WTC11 (cell line): ENCODE measurements at regions of chr14 and their contacts with region 1.

Region 1: DNA sequence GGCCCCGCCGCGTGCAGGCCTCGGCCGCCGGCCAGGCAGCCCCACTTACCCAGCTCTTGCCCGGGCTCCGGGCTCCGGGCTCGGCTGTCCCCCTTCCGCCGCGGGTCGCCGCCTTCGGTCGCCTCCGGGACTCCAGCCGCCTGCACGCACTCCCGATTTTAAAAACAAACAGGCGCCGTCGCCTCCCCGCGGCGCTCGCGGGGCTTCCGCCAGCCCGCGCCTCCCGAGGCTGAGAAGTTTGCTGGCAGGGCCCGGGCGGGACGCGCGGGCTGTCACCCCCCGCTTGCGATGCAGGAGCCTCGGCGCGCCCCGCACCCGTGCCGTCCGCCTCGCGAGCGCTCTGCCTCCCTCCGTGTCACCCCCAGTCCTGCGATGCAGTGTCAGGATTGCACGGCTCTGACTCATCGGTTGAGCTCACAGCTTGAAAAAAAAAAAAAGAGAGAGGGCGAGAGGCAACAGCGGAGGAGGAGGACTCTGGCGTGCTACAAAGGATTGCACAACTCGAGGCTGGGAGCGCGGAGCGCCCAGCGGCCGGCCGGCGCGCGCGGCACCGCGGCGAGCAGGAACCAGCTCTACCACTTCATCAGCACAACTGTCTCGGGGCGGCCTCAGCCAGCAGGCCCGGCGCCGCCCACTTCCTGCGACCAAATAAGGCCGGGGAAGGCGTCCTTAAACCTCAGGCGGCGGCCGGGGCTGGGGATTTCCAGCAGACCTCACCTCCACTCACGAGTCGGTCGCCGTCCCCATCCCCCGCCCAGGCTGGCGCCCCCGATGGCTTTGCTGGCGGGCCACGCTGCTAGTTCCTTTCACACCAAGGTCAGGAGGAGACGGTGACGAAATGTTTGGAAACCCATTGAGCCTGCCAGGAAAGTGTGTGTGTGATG is 45.8 kb upstream of the PNMA1 start:
- DNase-seq: peak; percentile 95
- ATAC-seq: peak; percentile 89
- H3K4me3 Mint-ChIP-seq: peak overlapping the region; percentile 79
- H3K27ac Mint-ChIP-seq: peak overlapping the region; percentile 96
- H3K4me1 Mint-ChIP-seq: peaks cover 61% of the 10 kb centered on the region
- H3K27me3 Mint-ChIP-seq: peaks cover 29% of the 10 kb centered on the region
- CTCF ChIP-seq: no peak

Region 2: DNA sequence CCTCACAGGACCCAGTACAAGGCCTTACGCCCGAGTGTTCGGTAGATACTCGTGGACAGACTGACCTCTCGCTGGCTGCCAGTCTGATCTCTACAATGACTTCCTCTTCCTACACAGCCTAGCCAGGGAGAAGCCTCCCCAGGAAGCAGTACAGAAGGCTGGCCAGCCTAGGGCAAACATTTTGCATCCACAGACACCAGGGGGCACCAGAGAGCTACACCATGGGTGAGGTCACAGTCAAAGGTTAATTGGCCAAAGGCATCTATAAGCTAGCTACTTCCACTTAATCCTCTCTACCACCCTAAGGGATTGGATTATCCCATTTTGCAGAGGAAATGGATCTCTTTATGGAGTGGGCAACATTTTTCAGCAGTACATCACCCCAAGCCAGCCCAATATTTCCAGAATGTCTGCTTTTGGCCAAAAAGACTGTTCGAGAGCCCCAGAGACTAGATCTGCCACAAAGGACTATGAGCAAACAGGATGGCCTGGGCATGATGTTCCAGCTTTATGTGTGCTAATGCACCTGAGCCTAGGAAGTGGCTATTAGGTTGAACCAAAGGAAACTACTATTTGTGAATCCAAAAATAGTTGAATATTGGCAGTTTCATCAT is 31.1 kb before region 1 on chr14:
- CTCF ChIA-PET with region 1: interaction called, 128 read pairs
- POLR2A ChIA-PET with region 1: interaction called, 12 read pairs
- DNase-seq: peak; percentile 93
- ATAC-seq: peak; percentile 93
- H3K4me3 Mint-ChIP-seq: no peak overlapping the region
- H3K27ac Mint-ChIP-seq: peak overlapping the region; percentile 91
- H3K4me1 Mint-ChIP-seq: peaks cover 19% of the 10 kb centered on the region
- H3K27me3 Mint-ChIP-seq: no peaks in the 10 kb centered on the region
- CTCF ChIP-seq: peak; percentile 77

Region 3: DNA sequence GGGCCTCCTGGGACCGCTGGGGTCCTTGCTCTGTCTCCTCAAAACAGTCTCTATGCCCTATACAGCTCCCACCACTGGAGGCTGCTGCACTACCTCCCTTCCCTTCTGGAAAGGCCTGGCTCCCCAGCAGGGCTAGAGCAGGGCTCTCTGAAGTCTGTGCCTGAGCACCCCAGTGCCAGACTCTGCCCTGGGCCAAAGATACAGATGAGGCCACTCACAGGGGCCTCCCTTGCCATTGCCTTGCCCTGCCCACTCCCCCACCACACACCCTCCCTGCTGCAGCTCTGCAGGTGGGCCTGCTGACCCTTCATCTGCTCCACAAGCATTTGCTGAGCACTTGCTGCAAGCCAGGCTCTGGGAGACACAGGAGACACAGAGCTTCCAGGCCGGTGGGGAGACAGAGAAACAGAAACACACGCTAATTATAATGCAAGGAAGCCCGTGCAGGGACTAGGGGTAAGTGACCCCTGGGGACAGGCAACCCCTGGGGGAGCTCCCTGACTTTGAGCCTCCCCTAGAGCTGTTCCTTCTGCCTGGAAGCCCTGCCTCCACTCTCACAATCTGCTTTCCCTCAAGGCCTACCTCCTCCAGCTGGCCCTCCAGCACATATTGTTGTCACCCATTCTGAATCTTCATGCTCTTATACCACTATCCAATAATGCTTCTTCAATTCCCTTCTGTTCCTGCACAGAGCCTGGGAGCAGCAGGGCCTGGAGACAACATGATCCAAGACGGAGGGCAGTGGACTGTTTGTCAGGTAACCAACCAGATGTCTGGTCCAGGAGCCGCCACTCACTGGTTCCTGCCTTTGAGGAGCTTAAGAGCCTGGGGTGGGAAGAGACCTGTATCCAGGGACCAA is 13.2 kb before region 1 on chr14:
- CTCF ChIA-PET with region 1: interaction called, 71 read pairs
- POLR2A ChIA-PET with region 1: interaction called, 9 read pairs
- DNase-seq: peak; percentile 22
- ATAC-seq: peak; percentile 31
- H3K4me3 Mint-ChIP-seq: no peak overlapping the region
- H3K27ac Mint-ChIP-seq: peak overlapping the region; percentile 88
- H3K4me1 Mint-ChIP-seq: peaks cover 68% of the 10 kb centered on the region
- H3K27me3 Mint-ChIP-seq: no peaks in the 10 kb centered on the region
- CTCF ChIP-seq: no peak

Region 4: GRCh38 chr14:73777401-73777800 is 17.4 kb after region 1 on chr14:
- CTCF ChIA-PET with region 1: interaction called, 42 read pairs
- POLR2A ChIA-PET with region 1: interaction called, 7 read pairs
- DNase-seq: no peak
- ATAC-seq: peak; percentile 85
- H3K4me3 Mint-ChIP-seq: no peak overlapping the region
- H3K27ac Mint-ChIP-seq: no peak overlapping the region
- H3K4me1 Mint-ChIP-seq: peaks cover 18% of the 10 kb centered on the region
- H3K27me3 Mint-ChIP-seq: peaks cover 19% of the 10 kb centered on the region
- CTCF ChIP-seq: no peak

Region 5: DNA sequence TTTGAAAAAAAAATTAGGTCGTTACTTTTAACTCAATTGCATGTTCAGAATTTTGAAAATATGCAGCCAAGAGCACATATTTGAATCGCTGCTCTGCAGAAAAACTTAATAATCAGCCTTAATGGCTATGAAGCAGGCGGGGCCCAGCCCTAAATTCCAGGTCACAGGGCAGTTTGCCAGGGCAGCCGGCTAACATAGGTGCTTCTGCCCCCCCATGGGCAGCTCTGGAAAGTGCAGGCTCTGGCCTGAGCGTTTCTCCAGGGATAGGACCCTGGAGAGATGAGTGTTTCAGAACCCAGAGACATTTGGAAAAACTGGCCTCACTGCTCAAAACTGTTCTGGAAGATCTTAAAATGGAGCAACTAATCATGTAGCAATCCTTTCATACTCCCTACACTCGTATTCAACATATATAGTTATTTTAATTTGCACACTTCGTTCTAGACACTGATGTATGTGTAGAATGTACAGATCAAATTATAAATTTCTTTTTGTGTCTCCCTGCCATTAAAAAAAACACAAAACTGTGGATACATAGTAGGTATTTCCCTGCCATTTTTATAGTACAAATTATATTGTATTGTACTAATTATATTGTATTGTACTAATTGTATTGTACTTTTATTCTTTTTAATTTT is 65.7 kb after region 1 on chr14:
- CTCF ChIA-PET with region 1: interaction called, 12 read pairs
- POLR2A ChIA-PET with region 1: no interaction called
- DNase-seq: peak; percentile 82
- ATAC-seq: peak; percentile 99
- H3K4me3 Mint-ChIP-seq: no peak overlapping the region
- H3K27ac Mint-ChIP-seq: peak overlapping the region; percentile 5; the same call in 1 of the 2 replicates
- H3K4me1 Mint-ChIP-seq: no peaks in the 10 kb centered on the region
- H3K27me3 Mint-ChIP-seq: no peaks in the 10 kb centered on the region
- CTCF ChIP-seq: peak; percentile 43